Spleen (tissue), 13 donors: ENCODE measurements at regions of chr11 and their contacts with region 1.

Region 1: GRCh38 chr11:67698247-67698646 is 23.8 kb upstream of the ALDH3B2 start:
- DNase-seq: no peak
- H3K4me3 ChIP-seq: no peak overlapping the region
- H3K27ac ChIP-seq: no peak overlapping the region
- H3K4me1 ChIP-seq: no peaks in the 10 kb centered on the region
- H3K27me3 ChIP-seq: peaks cover 0 to 21% (median 0%) of the 10 kb centered on the region in 7 donors
- CTCF ChIP-seq: no peak
- POLR2A ChIP-seq: no peak

Region 2: GRCh38 chr11:66920978-66921784 is 777.1 kb before region 1 on chr11:
- intact Hi-C with region 1: loop called (anchors 10 kb)
- DNase-seq: no peak
- H3K4me3 ChIP-seq: no peak overlapping the region
- H3K27ac ChIP-seq: no peak overlapping the region
- H3K4me1 ChIP-seq: peaks cover 0 to 6% (median 0%) of the 10 kb centered on the region in 6 donors
- H3K27me3 ChIP-seq: no peaks in the 10 kb centered on the region
- CTCF ChIP-seq: no peak
- POLR2A ChIP-seq: no peak